Activated naive CD4-positive, alpha-beta T cell treated with anti-CD3 and anti-CD28 coated beads for 36 hours (primary cell): ENCODE measurements at regions of chr5 and their contacts with region 1.

Region 1: GRCh38 chr5:100903039-100903887 is at the start of gene ST8SIA4:
- DNase-seq: peak; percentile 95
- H3K4me3 Mint-ChIP-seq: peak within 1 kb of the TSS; percentile 95
- H3K27ac Mint-ChIP-seq: peak within 1 kb of the TSS; percentile 99
- H3K4me1 Mint-ChIP-seq: peaks cover 32% of the 10 kb centered on the region
- H3K27me3 Mint-ChIP-seq: no peaks in the 10 kb centered on the region
- total RNA-seq, gene ST8SIA4: 11.2 to 16.2 TPM

Region 2: DNA sequence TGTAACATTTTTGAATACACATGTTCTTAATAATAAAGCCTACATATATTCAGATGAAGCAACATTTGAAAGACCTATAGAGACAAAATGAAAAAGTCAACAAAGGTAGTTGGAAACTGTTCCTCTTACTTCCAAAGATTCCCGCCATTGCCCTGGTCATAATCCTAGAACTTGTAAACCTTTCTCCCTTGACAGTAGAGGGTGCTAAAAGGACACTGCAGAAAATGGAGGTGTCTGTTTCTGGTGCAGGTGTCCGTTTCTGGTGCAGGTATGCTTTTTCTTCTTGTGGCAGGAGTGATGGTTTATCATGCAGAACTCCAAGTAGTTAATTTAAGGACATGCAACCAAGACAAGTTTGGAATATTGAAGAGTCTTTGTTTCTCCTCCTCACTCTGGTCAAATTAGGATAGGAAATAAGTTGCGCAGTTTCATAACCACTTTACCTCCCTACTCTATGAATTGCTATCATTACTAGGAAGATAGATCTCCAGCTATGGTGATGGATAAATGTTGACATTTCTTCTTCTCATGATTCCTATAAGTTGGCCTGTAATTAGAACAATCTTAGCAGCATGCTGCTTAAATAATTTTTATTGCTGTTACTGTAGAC is 424.1 kb before region 1 on chr5:
- CTCF ChIA-PET with region 1: no interaction called
- intact Hi-C with region 1: loop called (anchors 2 kb)
- DNase-seq: peak; percentile 4
- H3K4me3 Mint-ChIP-seq: no peak overlapping the region
- H3K27ac Mint-ChIP-seq: no peak overlapping the region
- H3K4me1 Mint-ChIP-seq: no peaks in the 10 kb centered on the region
- H3K27me3 Mint-ChIP-seq: no peaks in the 10 kb centered on the region

Region 3: GRCh38 chr5:100731768-100732167 is 171.5 kb before region 1 on chr5:
- CTCF ChIA-PET with region 1: no interaction called
- intact Hi-C with region 1: loop called (anchors 2 kb)
- DNase-seq: peak; percentile 8
- H3K4me3 Mint-ChIP-seq: peak overlapping the region; percentile 63
- H3K27ac Mint-ChIP-seq: no peak overlapping the region
- H3K4me1 Mint-ChIP-seq: peaks cover 4% of the 10 kb centered on the region
- H3K27me3 Mint-ChIP-seq: no peaks in the 10 kb centered on the region

Region 4: DNA sequence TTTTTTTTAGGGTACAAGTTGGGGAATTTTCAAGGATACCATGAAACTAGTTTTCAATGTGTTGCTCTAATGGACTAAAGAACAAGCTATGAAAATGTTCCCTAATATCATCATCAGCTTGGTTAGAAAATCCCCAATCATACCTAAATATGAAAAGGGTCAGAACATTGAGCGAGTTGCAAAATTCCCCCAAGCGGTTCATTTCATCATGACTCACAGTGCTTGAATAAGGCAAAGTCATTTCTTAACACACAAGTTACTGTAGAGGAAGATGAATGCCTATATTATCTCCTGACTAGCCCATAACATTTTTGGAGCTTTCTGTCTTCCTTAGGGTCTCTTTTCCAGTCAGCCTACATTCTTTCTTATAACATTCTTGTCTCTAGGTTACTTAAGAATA is 62.9 kb before region 1 on chr5:
- CTCF ChIA-PET with region 1: interaction called, 5 read pairs
- intact Hi-C with region 1: loop called (anchors 1 kb)
- DNase-seq: peak; percentile 69
- H3K4me3 Mint-ChIP-seq: no peak overlapping the region
- H3K27ac Mint-ChIP-seq: peak overlapping the region; percentile 77
- H3K4me1 Mint-ChIP-seq: peaks cover 62% of the 10 kb centered on the region
- H3K27me3 Mint-ChIP-seq: no peaks in the 10 kb centered on the region

Region 5: DNA sequence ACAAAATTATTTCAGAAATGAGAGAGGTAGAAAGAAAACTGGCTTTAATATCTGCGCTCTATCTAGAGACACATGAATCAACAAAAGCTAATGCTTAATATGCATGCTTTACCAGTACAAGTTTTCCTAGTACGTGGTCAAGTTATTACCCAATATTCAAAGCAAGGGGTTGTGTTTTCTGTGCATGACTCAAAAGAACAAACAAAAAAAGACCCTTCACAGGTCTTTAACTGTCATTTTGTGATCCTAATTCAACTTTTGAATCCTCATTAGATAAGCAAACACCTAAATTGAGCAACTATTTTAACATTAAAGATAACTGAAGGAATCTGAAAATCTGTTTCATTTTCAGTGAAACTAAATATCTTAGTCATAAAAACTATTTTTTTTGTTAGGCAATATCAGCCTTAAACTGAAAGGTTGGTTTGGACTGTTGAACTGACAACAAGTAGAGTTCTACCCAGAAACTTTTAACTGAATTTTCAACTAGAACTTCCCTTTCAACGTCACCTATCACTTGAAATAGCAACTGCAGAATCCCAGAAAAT is 12.7 kb before region 1 on chr5:
- CTCF ChIA-PET with region 1: interaction called, 13 read pairs
- intact Hi-C with region 1: loop called (anchors 1 kb)
- DNase-seq: no peak
- H3K4me3 Mint-ChIP-seq: peak overlapping the region; percentile 52
- H3K27ac Mint-ChIP-seq: peak overlapping the region; percentile 70
- H3K4me1 Mint-ChIP-seq: peaks cover 53% of the 10 kb centered on the region
- H3K27me3 Mint-ChIP-seq: no peaks in the 10 kb centered on the region

Region 6: GRCh38 chr5:102223542-102224477 is 1320.5 kb after region 1 on chr5:
- CTCF ChIA-PET with region 1: no interaction called
- intact Hi-C with region 1: loop called (anchors 10 kb)
- DNase-seq: no peak
- H3K4me3 Mint-ChIP-seq: no peak overlapping the region
- H3K27ac Mint-ChIP-seq: no peak overlapping the region
- H3K4me1 Mint-ChIP-seq: no peaks in the 10 kb centered on the region
- H3K27me3 Mint-ChIP-seq: peaks cover 4% of the 10 kb centered on the region